Pancreas (tissue), 10 donors: ENCODE measurements at regions of chr6 and their contacts with region 1.

Region 1: DNA sequence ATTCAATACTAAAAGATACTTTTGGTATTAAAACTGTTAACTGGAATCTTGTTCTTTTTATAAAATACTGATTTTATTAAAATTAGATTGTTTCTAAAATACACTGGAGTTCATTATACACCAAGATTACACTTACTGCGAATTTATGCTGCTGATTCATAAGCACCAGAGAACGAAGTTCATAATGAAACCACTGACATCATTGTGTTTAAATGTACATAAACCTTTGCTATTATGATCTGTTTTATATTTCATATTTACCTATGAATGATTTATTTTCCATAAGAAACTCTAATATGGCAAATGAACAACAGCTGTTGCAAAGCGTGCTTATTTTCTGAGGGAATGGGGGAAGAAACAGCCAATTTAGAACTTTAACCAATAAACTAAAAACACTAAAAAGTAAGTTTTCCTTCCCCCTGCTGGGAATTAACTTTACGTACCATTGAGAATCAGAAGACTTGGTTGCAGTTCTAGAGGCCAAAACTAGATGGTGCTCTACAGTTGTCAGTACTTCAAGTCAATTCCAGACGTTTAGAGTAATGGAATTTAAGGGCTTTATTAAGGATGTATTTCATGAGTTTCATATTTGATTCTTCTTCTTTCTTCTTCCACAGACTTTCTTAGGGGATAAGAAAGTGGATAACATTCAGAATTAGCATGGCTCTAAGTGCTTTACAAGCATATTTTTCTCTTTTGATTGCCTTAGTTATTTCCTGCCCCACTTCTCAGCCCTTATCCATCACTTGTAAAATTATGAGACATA is 30.8 kb upstream of the COL19A1 start:
- DNase-seq: peak in 2 of 6 donors; percentile 5 to 28
- ATAC-seq: peak; percentile 58 to 95 (median 90)
- H3K4me3 ChIP-seq: no peak overlapping the region
- H3K27ac ChIP-seq: no peak overlapping the region
- H3K4me1 ChIP-seq: peaks cover 0 to 4% (median 0%) of the 10 kb centered on the region in 3 donors
- H3K27me3 ChIP-seq: no peaks in the 10 kb centered on the region
- CTCF ChIP-seq: peak; percentile 38 to 74 (median 55)

Region 2: GRCh38 chr6:69973138-69973537 is 137.5 kb after region 1 on chr6:
- intact Hi-C with region 1: no loop called
- DNase-seq: no peak
- ATAC-seq: no peak
- H3K4me3 ChIP-seq: no peak overlapping the region
- H3K27ac ChIP-seq: no peak overlapping the region
- H3K4me1 ChIP-seq: peaks cover 0 to 4% (median 0%) of the 10 kb centered on the region in 3 donors
- H3K27me3 ChIP-seq: no peaks in the 10 kb centered on the region
- CTCF ChIP-seq: no peak

Region 3: DNA sequence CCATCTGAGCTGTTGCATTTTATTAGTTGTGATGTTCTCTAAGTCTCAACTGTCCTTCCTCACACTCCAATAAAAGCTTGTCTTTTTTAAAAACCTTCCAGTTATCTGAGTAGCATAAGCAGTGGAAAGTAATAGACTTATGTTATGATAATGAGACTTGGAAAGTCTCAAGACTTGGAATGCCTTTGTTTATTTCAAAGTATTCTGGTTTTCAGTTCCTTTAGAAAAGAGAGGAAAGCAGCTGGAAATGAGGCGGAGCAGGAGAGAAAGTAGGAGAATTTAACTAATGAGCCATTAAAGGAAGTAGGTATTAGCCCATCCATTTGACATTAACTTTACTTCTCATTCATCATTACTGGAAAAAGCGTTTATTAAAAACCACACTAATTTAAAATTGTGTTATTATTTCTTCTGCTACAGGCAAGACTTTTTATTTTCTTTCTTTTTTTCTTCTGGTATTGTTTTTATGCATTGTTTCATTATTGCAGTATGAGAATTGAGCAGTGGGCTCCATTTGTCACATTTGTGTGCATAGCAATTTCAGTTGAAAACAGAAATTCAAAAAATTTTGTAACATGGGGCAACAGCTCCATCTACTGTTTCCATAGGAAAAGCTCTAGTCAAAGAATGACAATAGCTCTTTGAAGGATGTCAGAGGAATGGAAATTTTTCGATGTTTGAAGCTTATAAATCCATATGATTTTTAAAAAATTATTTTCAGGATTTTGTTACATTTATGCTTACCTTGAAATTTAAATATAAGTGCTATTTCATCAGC is 272.4 kb after region 1 on chr6:
- intact Hi-C with region 1: loop called in 1 of 3 experiments (anchors 10 kb)
- DNase-seq: no peak
- ATAC-seq: peak; percentile 50 to 72 (median 58)
- H3K4me3 ChIP-seq: no peak overlapping the region
- H3K27ac ChIP-seq: no peak overlapping the region
- H3K4me1 ChIP-seq: peaks cover 10 to 27% (median 19%) of the 10 kb centered on the region in 3 donors
- H3K27me3 ChIP-seq: no peaks in the 10 kb centered on the region
- CTCF ChIP-seq: peak; percentile 22 to 57 (median 35)